ENCODE measurements at regions of chr3 and their contacts with region 1.

Region 1: GRCh38 chr3:39126532-39127071 is 19.1 kb downstream of the TTC21A start:
- DNase-seq: peak; percentile 79

Region 2: DNA sequence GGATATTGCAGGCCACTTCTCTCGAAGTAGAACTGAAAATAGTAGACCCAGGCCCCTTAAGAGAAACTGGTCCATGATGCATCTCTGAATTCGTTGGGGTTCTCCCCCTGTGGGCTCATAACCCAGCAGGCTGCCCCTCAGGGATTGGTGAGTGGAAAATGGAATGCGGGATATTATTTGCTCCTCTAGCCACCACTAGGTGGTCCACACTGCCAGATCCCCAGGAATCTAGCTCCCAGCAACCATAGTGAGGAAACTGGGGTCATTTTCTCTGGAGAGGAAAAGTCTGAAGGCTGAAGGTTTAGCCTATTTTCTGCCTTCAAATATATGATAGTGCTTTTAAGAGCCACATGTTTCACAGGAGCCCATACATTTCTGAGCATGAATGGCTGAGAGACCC is 146.5 kb after region 1 on chr3:
- intact Hi-C with region 1: loop called in 1 of 2 experiments (anchors 5 kb)
- DNase-seq: no peak